Right ventricle myocardium inferior (tissue), 1 donor: ENCODE measurements at regions of chr2 and their contacts with region 1.

Region 1: GRCh38 chr2:152175458-152176325 is at the start of gene STAM2:
- DNase-seq: peak; percentile 95
- ATAC-seq: peak; percentile 95
- total RNA-seq, gene STAM2: 27.0 TPM

Region 2: DNA sequence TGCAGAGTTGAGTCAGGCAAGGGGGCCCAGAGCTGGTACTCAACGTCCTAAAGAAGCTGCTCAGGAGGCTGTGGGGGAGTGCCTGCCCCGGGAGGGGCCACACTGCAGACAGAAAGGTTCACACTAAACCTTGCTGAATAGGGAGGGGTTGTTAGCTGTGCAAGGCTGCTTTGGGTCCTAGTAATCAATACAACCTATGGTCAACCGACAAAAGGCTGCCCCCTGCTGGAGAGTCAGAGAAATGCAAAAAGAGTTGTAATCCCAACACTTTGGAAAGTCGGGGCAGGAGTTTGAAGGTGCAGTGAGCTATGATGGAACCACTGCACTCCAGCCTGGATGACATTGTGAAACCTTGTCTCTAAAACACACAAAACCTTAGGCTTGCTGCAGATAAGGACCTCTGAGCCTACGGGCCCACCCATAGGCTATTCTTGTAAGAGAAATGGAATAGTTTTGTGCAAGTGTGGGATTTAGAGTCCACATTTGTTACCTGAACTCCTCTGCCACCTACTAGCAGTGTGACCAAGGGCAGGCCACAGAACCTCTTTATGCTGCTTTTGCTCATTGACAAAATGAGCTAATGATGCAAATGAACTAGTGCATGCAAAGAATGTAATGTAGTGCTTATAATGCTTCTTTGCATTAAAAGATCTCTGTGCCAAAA is 460.1 kb after region 1 on chr2:
- intact Hi-C with region 1: loop called (anchors 5 kb)
- DNase-seq: no peak
- ATAC-seq: peak; percentile 56

Region 3: DNA sequence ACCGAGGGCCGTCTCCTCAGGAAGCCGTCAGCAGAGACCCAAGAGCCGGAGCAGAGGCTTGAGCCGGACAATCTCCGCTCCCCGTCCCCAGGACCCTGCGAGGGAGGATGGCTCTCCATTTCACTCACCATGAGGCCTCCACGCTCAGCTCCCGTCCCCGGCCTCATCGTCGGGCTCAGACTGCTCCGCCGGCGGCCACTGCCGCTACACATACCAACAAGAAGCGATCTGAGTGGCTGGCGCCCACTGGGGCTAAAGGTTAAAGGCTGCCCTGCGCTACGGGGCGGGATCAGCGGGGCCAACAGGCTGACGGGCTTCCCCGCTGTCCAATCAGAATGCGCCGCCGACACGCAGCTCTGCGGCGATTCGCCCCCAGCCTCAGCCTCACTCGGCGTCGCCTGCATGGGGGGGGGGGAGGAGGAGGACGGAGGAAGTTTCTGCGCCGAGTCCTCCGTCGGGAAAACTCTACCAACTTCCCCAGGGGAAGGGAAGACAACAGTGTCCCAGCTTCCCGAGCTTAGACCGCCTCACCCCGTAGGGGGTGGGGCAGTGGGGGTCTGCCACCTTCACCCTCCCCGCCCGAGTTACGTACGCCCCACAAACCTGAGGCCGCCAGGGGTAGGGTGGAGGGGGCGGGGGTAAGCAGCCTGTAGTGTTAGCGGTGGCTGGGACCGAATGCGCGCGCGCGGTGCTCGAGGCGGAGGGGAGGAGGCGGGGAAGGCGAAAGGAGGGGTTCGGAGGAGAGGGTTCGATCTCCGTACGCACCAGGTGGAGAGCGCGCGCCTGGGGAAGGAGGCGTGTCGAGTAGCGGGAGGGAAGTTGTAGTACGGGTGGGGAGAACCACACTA is 541.8 kb after region 1 on chr2 and contains the start of gene PRPF40A:
- intact Hi-C with region 1: loop called (anchors 2 kb)
- DNase-seq: peak; percentile 98
- ATAC-seq: peak; percentile 94
- total RNA-seq, gene PRPF40A: 36.0 TPM